ENCODE measurements at regions of chr19 and their contacts with region 1.

Region 1: DNA sequence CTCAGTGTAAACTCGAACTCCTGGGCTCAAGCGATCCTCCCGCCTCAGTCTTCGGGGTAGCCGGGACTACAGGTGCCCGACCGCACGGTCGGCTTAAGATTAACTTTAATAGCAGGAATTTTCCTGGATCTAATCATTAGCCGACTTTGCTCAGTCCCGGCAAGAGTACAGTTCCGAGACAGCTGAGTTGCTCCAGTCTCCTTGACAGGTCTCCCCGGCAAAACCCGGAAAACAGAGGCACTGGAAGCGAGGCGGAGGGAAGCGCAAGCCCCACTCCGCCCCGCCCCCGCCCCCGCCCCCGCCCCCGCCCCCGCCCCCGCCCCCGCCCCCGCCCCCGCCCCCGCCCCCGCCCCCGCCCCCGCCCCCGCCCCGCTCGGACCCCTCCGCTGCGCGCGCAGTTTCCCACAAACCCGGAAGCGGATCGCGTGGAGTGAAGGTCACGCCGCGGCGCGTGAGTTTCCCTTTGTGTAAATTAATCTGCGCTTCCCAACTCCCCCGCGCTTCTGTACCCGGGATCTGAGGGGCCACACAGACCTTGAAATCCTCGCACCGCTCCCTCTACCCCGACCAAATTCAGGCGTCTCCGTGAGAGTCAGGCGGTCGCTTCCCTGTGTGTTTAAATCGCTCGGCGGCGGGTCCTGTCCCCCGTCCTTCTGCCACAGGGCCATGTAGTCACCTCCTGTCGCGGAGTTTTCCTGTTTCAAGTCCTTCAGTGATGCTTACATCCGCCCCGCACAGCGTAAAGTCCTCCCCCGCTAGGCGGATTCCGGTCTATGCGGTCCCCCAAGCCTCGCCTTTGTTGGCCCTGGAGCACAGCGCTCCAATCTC is at the start of gene ZNF480:
- DNase-seq: peak; percentile 75
- H3K4me3 ChIP-seq: peak within 1 kb of the TSS; percentile 64 to 97 (median 97)
- H3K27ac ChIP-seq: peak within 1 kb of the TSS; percentile 97
- H3K4me1 ChIP-seq: peaks cover 4% of the 10 kb centered on the region
- H3K27me3 ChIP-seq: no peaks in the 10 kb centered on the region
- CTCF ChIP-seq: peak in 1 of 2 donors; percentile 14
- POLR2A ChIP-seq: peak; percentile 83
- total RNA-seq, gene ZNF480: 9.2 and 10.0 TPM in 2 replicates

Region 2: GRCh38 chr19:52171321-52172169 is 125.4 kb before region 1 on chr19 and contains the start of gene ZNF836:
- CTCF ChIA-PET with region 1: no interaction called
- POLR2A ChIA-PET with region 1: no interaction called
- dilution Hi-C with region 1: no loop called
- intact Hi-C with region 1: no loop called
- DNase-seq: peak; percentile 81
- H3K4me3 ChIP-seq: peak within 1 kb of the TSS; percentile 88 to 95 (median 93)
- H3K27ac ChIP-seq: peak within 1 kb of the TSS; percentile 22
- H3K4me1 ChIP-seq: peaks cover 4% of the 10 kb centered on the region
- H3K27me3 ChIP-seq: no peaks in the 10 kb centered on the region
- CTCF ChIP-seq: no peak
- POLR2A ChIP-seq: peak; percentile 55
- total RNA-seq, gene ZNF836: 7.2 and 9.3 TPM in 2 replicates

Region 3: DNA sequence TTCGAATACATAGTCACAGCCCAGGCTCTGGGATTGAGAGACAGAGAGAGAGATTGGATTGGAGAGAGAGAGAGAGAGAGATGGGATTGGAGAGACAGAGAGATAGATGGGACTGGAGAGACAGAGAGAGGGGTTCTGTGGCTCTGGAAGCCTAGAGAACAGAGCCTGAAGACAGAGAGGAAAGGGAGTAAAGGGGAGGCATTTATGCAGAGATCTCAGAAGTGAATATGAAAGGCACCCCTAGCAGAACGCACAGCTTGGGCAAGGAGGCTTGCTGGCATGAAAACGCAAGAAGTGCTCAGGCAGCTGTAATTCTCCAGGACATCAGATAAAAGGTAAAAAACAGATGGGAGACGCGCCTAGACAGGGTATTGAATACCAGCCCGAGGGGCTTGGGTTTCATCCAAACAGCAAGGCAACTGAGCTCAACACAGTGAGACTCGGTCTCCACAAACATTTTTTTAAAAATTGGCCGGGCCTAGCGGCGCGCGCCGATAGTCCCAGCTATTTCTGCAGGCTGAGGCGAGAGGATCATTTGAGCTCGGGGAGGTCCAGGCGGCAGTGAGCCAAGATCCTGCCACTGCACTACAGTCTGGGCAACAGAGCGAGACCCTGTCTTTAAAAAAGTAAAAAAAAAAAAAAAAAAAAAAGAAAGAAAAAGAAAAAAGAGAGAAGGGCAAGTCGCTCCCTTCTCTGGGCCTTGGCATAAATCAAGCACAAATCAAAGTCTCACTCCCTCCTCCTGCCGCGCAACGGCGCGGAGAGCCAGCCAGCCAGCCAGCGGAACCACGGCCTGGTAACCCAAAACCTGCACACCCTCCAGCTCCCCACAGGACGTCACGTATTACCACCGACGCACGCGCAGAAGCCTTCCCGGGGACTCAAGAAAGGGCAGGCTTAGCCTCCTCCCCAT is 107.9 kb before region 1 on chr19:
- CTCF ChIA-PET with region 1: no interaction called
- POLR2A ChIA-PET with region 1: no interaction called
- dilution Hi-C with region 1: no loop called
- intact Hi-C with region 1: no loop called
- DNase-seq: no peak
- H3K4me3 ChIP-seq: peak overlapping the region; percentile 30 to 50 (median 33)
- H3K27ac ChIP-seq: peak overlapping the region; percentile 6
- H3K4me1 ChIP-seq: peaks cover 16% of the 10 kb centered on the region
- H3K27me3 ChIP-seq: no peaks in the 10 kb centered on the region
- CTCF ChIP-seq: no peak
- POLR2A ChIP-seq: peak; percentile 82

Region 4: DNA sequence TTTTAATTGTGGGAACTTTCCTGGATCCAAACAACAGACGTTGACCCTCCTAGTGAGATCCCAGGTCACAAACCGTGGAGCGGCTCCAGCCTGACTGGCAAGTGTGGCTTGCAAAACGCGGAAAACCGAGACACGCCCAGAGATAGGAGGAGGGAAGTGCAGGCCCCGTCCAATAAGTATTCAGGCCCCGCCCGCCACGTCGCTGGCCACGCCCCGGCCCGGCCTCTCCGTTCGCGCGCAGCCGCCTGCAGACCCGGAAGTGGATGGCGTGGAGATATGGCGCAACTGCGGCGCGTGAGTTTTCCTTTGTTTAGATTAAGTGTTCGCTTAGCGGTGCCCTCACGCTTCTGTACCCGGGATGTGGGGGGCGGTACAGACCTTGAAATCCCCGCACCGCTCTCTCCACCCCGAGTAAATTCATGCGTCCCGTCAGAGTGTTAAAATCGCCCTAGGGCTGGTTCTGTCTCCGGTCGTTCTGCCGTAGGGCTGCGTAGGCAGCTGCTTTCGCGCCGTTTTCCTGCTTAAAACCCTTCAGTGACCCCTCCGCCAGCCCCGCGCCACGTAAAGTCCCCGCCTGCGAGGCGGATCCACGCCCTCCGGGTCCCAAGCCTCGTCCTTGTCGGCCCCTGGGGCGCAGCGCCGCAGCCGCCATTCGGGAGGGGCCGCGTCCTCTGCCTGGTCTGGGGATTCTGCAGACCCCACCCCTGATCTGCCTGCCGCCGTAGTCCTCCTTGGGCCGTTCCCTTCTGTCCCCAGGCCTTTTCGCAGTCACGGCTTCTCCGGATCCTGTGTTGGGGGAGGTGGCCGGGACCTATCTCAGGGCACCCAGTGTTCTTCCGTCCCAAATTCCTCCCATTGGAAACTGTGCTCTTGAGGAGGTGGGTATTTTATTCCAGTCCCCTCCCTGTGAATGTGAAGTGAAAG is 27.4 kb before region 1 on chr19 and contains the start of gene ZNF766:
- CTCF ChIA-PET with region 1: no interaction called
- POLR2A ChIA-PET with region 1: no interaction called
- dilution Hi-C with region 1: no loop called
- intact Hi-C with region 1: loop called (anchors 1 kb)
- DNase-seq: peak; percentile 95
- H3K4me3 ChIP-seq: peak within 1 kb of the TSS; percentile 89 to 96 (median 94)
- H3K27ac ChIP-seq: peak within 1 kb of the TSS; percentile 96
- H3K4me1 ChIP-seq: peaks cover 6% of the 10 kb centered on the region
- H3K27me3 ChIP-seq: no peaks in the 10 kb centered on the region
- CTCF ChIP-seq: no peak
- POLR2A ChIP-seq: peak; percentile 89
- total RNA-seq, gene ZNF766: 8.9 and 9.1 TPM in 2 replicates